ENCODE measurements at regions of chr16 and their contacts with region 1.

Region 1: GRCh38 chr16:55021595-55022475 is 91.2 kb downstream of the IRX5 start:
- DNase-seq: peak; percentile 67
- ATAC-seq: peak; percentile 97
- H3K4me3 ChIP-seq: no peak overlapping the region; a peak in 1 of 4 replicates
- H3K27ac ChIP-seq: peak overlapping the region; percentile 27; the same call in 1 of the 2 replicates
- H3K4me1 ChIP-seq: peaks cover 7 to 12% of the 10 kb centered on the region in 2 experiments; a peak in 3 of 4 replicates
- H3K27me3 ChIP-seq: no peaks in the 10 kb centered on the region
- CTCF ChIP-seq: peak; percentile 34 to 67 (median 66); a peak in 5 of 6 replicates
- POLR2A ChIP-seq: no peak
- RAD21 ChIP-seq: peak; percentile 30; the same call in 1 of the 2 replicates

Region 2: DNA sequence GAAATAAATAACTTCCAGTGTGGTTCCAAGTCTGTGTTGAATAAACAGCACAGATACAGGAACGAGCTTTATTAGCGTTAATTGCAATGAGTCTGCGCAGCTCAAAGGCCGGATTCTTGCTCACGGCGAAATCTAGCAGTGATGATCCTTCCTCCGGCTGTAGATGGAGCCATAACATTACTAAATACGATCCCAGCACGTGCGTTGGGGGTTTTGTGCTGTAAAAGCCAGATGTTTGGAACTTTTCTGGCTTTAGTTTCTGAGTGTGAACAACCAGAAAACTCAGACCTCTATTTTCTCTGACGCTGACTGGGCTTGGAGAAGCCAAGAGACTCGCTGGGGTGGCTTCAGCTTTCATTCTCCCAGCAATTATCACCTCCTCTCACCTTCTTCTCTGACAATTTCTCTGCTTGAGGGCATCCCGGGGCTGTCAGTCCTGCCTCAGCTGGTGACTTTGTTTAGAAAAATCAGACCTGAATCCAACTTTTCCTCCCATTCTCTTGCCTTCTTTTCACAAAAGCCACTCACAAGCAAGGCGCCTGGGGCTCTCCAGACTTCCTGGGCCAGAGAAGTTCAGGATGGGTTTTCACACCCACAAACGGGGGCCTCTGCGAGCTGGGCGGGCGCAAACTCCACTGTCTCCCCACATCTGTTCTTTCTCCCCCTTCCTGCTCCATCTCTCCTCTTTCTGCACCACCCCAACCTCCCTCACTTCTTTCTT is 1471.7 kb before region 1 on chr16:
- CTCF ChIA-PET with region 1: interaction called, 4 read pairs
- POLR2A ChIA-PET with region 1: no interaction called
- RAD21 ChIA-PET with region 1: interaction called in 1 of 2 experiments, 3 read pairs
- intact Hi-C with region 1: loop called (anchors 5 kb)
- DNase-seq: peak; percentile 46
- ATAC-seq: peak; percentile 86
- H3K4me3 ChIP-seq: no peak overlapping the region
- H3K27ac ChIP-seq: no peak overlapping the region
- H3K4me1 ChIP-seq: peaks cover 0 to 9% of the 10 kb centered on the region in 2 experiments; a peak in 2 of 4 replicates
- H3K27me3 ChIP-seq: no peaks in the 10 kb centered on the region
- CTCF ChIP-seq: peak; percentile 59 to 82 (median 61); a peak in 5 of 6 replicates
- POLR2A ChIP-seq: no peak
- RAD21 ChIP-seq: peak; percentile 89

Region 3: GRCh38 chr16:55035029-55035428 is 13.2 kb after region 1 on chr16:
- CTCF ChIA-PET with region 1: interaction called, 14 read pairs
- POLR2A ChIA-PET with region 1: no interaction called
- RAD21 ChIA-PET with region 1: interaction called in 1 of 2 experiments, 3 read pairs
- intact Hi-C with region 1: no loop called
- DNase-seq: peak; percentile 19
- ATAC-seq: peak; percentile 89
- H3K4me3 ChIP-seq: no peak overlapping the region
- H3K27ac ChIP-seq: no peak overlapping the region
- H3K4me1 ChIP-seq: peaks cover 0 to 11% of the 10 kb centered on the region in 2 experiments; a peak in 2 of 4 replicates
- H3K27me3 ChIP-seq: no peaks in the 10 kb centered on the region
- CTCF ChIP-seq: peak; percentile 33 to 78 (median 73); a peak in 4 of 6 replicates
- POLR2A ChIP-seq: no peak
- RAD21 ChIP-seq: peak; percentile 59

Measured in HCT116 (cell line).